ENCODE measurements at regions of chr22 and their contacts with region 1.

Region 1: GRCh38 chr22:27880778-27881394 is 38.2 kb downstream of the PITPNB start:
- DNase-seq: no peak
- H3K4me3 Mint-ChIP-seq: no peak overlapping the region
- H3K27ac Mint-ChIP-seq: no peak overlapping the region
- H3K4me1 Mint-ChIP-seq: peaks cover 20% of the 10 kb centered on the region
- H3K27me3 Mint-ChIP-seq: no peaks in the 10 kb centered on the region

Region 2: GRCh38 chr22:27780161-27780575 is 100.7 kb before region 1 on chr22:
- CTCF ChIA-PET with region 1: no interaction called
- POLR2A ChIA-PET with region 1: no interaction called
- DNase-seq: no peak
- H3K4me3 Mint-ChIP-seq: no peak overlapping the region
- H3K27ac Mint-ChIP-seq: no peak overlapping the region
- H3K4me1 Mint-ChIP-seq: no peaks in the 10 kb centered on the region
- H3K27me3 Mint-ChIP-seq: peaks cover 4% of the 10 kb centered on the region

Region 3: DNA sequence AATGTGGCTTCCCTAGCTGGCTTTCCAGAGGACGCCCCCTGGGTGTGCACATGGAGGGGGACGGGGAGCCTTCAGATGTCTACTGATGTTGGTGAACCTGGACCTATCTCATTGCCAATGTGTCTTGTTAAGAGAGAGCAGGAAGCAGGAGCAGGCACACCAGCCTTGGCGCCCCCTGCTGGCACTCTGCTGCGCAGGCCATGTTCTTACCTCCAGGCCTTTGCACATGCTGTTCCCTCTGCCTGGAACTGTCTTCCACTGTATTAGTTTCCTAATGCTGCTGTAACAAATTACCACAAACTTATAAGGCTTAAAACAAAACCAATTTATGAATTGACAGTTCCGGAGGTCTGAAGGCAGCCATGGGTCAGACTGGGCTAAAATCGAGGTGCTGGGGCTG is 55.7 kb before region 1 on chr22:
- CTCF ChIA-PET with region 1: no interaction called
- POLR2A ChIA-PET with region 1: no interaction called
- DNase-seq: peak; percentile 32
- H3K4me3 Mint-ChIP-seq: no peak overlapping the region
- H3K27ac Mint-ChIP-seq: no peak overlapping the region
- H3K4me1 Mint-ChIP-seq: no peaks in the 10 kb centered on the region
- H3K27me3 Mint-ChIP-seq: no peaks in the 10 kb centered on the region

Region 4: GRCh38 chr22:27842669-27843431 is 38.0 kb before region 1 on chr22:
- CTCF ChIA-PET with region 1: no interaction called
- POLR2A ChIA-PET with region 1: no interaction called
- DNase-seq: no peak
- H3K4me3 Mint-ChIP-seq: no peak overlapping the region
- H3K27ac Mint-ChIP-seq: no peak overlapping the region
- H3K4me1 Mint-ChIP-seq: no peaks in the 10 kb centered on the region
- H3K27me3 Mint-ChIP-seq: no peaks in the 10 kb centered on the region

Region 5: GRCh38 chr22:27863001-27863400 is 17.9 kb before region 1 on chr22:
- CTCF ChIA-PET with region 1: interaction called, 12 read pairs
- POLR2A ChIA-PET with region 1: interaction called, 5 read pairs
- DNase-seq: no peak
- H3K4me3 Mint-ChIP-seq: no peak overlapping the region
- H3K27ac Mint-ChIP-seq: no peak overlapping the region
- H3K4me1 Mint-ChIP-seq: peaks cover 16% of the 10 kb centered on the region
- H3K27me3 Mint-ChIP-seq: no peaks in the 10 kb centered on the region